CD4-positive, alpha-beta T cell (primary cell): ENCODE measurements at regions of chr3 and their contacts with region 1.

Region 1: DNA sequence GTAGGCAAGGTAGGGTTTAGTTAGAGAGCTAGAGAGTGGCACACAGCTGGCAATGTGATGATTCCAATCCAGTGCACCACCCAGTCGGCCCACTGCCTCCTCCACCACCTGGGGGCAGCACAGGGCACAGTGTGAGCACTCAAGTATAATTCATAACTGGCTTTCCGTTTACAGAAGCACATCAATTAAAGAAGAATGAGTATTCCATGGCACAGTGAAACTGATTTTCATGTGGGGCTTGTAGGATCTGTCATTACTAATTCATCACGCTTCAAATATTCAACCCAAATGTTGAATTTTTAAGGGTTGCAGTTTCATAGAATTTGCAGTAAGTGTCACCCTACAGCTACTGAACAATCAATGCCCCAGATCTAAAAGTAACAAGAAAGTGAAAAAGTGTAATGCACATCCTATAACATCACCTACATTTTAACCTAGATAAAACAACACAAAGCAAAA is 149.9 kb downstream of the IGSF11 start:
- DNase-seq: peak; percentile 62 to 85 (median 74)
- ATAC-seq: peak; percentile 85
- H3K4me3 ChIP-seq: no peak overlapping the region
- H3K4me3 Mint-ChIP-seq: no peak overlapping the region
- H3K27ac ChIP-seq: no peak overlapping the region
- H3K27ac Mint-ChIP-seq: no peak overlapping the region
- H3K4me1 ChIP-seq: no peaks in the 10 kb centered on the region
- H3K4me1 Mint-ChIP-seq: no peaks in the 10 kb centered on the region
- H3K27me3 ChIP-seq: peaks cover 0 to 15% of the 10 kb centered on the region in 2 experiments
- H3K27me3 Mint-ChIP-seq: peaks cover 12% of the 10 kb centered on the region
- CTCF ChIP-seq: peak; percentile 96

Region 2: DNA sequence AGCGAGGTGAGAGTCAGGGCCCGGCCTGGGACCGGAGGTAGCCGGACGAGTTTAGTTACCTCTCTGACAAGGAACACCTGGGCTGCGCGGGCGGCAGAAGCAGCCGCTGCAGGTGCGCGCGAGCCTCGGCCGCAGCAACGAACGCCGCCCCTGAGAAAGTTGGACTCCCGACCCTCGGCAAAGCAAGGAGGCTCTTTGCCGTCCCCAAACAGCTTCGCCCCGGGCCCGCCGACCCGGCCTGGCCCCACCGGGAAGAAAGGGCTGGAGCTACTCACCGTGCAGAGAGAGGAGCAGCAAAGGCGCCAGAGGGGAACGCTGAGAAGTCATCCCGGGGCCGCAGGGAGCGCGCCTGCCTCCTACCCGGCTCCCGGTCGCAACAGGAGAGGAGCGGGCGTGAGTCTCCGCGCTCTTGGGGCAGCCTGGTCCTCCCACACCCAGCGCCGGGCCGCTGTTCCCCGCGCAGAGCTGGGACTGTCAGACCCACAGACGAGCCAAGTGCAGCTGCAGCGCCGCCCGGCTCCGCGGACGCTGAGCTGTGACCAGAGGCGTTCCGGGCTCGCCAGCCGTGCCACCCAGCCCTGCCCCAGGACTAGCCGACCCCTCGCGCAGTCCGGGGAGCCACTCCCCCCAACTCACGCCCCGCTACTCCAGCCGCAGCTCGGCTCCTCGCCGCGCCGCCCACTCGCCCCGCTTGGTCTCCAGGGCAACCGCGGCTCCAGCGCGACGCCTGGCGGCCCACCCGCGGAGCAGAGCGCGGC is 149.7 kb after region 1 on chr3 and contains the start of gene IGSF11:
- CTCF ChIA-PET with region 1: interaction called, 103 read pairs
- POLR2A ChIA-PET with region 1: interaction called, 39 read pairs
- intact Hi-C with region 1: loop called (anchors 1 kb)
- DNase-seq: peak; percentile 42 to 81 (median 60)
- ATAC-seq: peak; percentile 92
- H3K4me3 ChIP-seq: peak within 1 kb of the TSS; percentile 64
- H3K4me3 Mint-ChIP-seq: peak within 1 kb of the TSS; percentile 91
- H3K27ac ChIP-seq: no peak within 1 kb of the TSS
- H3K27ac Mint-ChIP-seq: no peak within 1 kb of the TSS
- H3K4me1 ChIP-seq: peaks cover 11% of the 10 kb centered on the region
- H3K4me1 Mint-ChIP-seq: peaks cover 5% of the 10 kb centered on the region
- H3K27me3 ChIP-seq: peaks cover 9 to 27% of the 10 kb centered on the region in 2 experiments
- H3K27me3 Mint-ChIP-seq: peaks cover 49% of the 10 kb centered on the region
- CTCF ChIP-seq: peak; percentile 47
- total RNA-seq, gene IGSF11: 0.53 to 0.58 TPM

Region 3: GRCh38 chr3:119098619-119099222 is 213.9 kb after region 1 on chr3:
- CTCF ChIA-PET with region 1: interaction called, 134 read pairs
- POLR2A ChIA-PET with region 1: interaction called, 9 read pairs
- intact Hi-C with region 1: loop called (anchors 1 kb)
- DNase-seq: peak in 4 of 14 experiments; percentile 14 to 67 (median 62)
- ATAC-seq: no peak
- H3K4me3 ChIP-seq: no peak overlapping the region
- H3K4me3 Mint-ChIP-seq: no peak overlapping the region
- H3K27ac ChIP-seq: no peak overlapping the region
- H3K27ac Mint-ChIP-seq: no peak overlapping the region
- H3K4me1 ChIP-seq: no peaks in the 10 kb centered on the region
- H3K4me1 Mint-ChIP-seq: no peaks in the 10 kb centered on the region
- H3K27me3 ChIP-seq: no peaks in the 10 kb centered on the region
- H3K27me3 Mint-ChIP-seq: no peaks in the 10 kb centered on the region
- CTCF ChIP-seq: peak; percentile 90

Region 4: DNA sequence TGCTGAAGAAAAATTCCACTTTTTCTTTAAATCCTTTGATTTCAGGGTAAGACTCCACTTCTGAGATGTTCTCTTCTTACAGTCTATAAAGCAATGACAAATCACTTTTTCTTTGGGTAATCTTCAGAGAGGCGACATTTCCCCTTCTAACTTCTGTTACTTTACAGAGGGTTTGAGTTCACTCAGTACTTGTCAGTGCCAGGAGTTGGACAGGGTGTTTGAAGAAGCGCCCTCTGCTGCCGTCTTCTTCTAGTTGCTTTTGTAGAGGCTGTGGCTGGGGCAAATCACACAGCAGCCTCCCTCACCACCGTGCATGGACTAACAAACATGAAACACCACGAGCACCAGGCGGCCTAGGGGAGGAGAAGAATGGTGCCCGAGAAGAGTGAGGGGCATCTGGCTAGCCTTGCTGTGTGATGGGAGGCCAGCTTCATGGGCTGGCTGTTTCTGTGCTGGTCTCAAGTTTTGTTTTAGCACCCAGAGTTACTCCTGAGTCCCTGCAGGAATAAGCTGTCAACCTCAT is 674.7 kb after region 1 on chr3 and contains the start of gene CD80:
- CTCF ChIA-PET with region 1: no interaction called
- POLR2A ChIA-PET with region 1: no interaction called
- intact Hi-C with region 1: loop called in 1 of 2 experiments (anchors 5 kb)
- DNase-seq: peak; percentile 18 to 80 (median 36)
- ATAC-seq: peak; percentile 57
- H3K4me3 ChIP-seq: peak within 1 kb of the TSS; percentile 24
- H3K4me3 Mint-ChIP-seq: no peak within 1 kb of the TSS
- H3K27ac ChIP-seq: no peak within 1 kb of the TSS
- H3K27ac Mint-ChIP-seq: no peak within 1 kb of the TSS
- H3K4me1 ChIP-seq: peaks cover 22% of the 10 kb centered on the region
- H3K4me1 Mint-ChIP-seq: peaks cover 6% of the 10 kb centered on the region
- H3K27me3 ChIP-seq: no peaks in the 10 kb centered on the region
- H3K27me3 Mint-ChIP-seq: no peaks in the 10 kb centered on the region
- CTCF ChIP-seq: peak; percentile 27
- total RNA-seq, gene CD80: 0.17 to 0.41 TPM

Region 5: GRCh38 chr3:119676771-119677640 is 792.2 kb after region 1 on chr3 and contains the start of gene COX17:
- CTCF ChIA-PET with region 1: interaction called, 6 read pairs
- POLR2A ChIA-PET with region 1: no interaction called
- intact Hi-C with region 1: loop called in 1 of 2 experiments (anchors 5 kb)
- DNase-seq: peak; percentile 92 to 99 (median 95)
- ATAC-seq: peak; percentile 87
- H3K4me3 ChIP-seq: peak within 1 kb of the TSS; percentile 68
- H3K4me3 Mint-ChIP-seq: peak within 1 kb of the TSS; percentile 87
- H3K27ac ChIP-seq: peak within 1 kb of the TSS; percentile 81 to 85
- H3K27ac Mint-ChIP-seq: peak within 1 kb of the TSS; percentile 91
- H3K4me1 ChIP-seq: peaks cover 8% of the 10 kb centered on the region
- H3K4me1 Mint-ChIP-seq: peaks cover 36% of the 10 kb centered on the region
- H3K27me3 ChIP-seq: no peaks in the 10 kb centered on the region
- H3K27me3 Mint-ChIP-seq: no peaks in the 10 kb centered on the region
- CTCF ChIP-seq: no peak
- total RNA-seq, gene COX17: 24.6 to 26.3 TPM